ENCODE measurements at regions of chr17 and their contacts with region 1.

Region 1: GRCh38 chr17:75109407-75110233 is at the start of gene ARMC7:
- DNase-seq: peak; percentile 86 to 92 (median 88)
- H3K4me3 ChIP-seq: peak within 1 kb of the TSS; percentile 93
- H3K4me3 Mint-ChIP-seq: peak within 1 kb of the TSS; percentile 87 to 93 (median 91)
- H3K27ac ChIP-seq: peak within 1 kb of the TSS; percentile 59
- H3K27ac Mint-ChIP-seq: peak within 1 kb of the TSS; percentile 81 to 96 (median 91)
- H3K4me1 ChIP-seq: peaks cover 28% of the 10 kb centered on the region
- H3K4me1 Mint-ChIP-seq: peaks cover 29 to 42% (median 36%) of the 10 kb centered on the region in 3 donors
- H3K27me3 ChIP-seq: no peaks in the 10 kb centered on the region
- H3K27me3 Mint-ChIP-seq: no peaks in the 10 kb centered on the region
- total RNA-seq, gene ARMC7: 15.2 to 15.9 TPM

Region 2: DNA sequence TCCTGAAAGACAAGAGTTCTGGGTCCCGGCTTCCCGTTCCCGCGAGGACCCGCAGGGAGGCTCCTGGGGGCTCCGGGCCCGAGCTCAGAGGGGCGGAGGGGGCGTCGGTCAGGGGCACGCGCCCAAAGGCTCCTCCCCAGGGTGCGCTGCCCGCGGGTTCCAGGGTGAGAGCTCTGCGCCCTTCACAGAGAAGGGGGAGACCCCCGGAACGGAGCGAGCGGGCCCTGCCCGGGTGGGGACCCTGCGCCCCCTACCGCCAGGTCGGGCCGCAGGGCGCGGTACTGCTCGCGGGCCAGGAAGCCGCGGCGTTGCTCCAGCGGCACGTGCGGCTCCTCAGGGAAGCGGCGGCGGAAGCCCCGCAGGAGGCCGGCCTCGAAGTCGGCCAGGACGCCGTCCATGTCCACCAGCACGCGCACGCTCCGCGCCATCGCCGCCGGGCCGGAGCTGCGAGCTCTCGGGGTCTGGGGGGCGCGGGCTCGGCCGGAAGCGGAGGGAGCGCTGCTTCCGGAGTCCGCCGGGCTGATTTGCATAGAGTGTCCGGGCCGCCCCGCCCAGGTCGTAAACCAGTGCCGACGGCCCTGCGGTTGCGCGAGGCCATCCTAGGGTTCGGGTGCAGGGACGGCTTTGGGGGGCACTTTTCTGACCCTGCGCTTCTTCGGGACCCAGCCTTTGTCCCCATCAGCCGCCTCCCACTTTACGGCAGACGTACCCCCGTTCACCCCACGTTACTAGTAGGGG is 21.8 kb after region 1 on chr17 and contains the start of gene NT5C:
- CTCF ChIA-PET with region 1: interaction called, 151 read pairs
- POLR2A ChIA-PET with region 1: interaction called, 12 read pairs
- DNase-seq: peak; percentile 48 to 70 (median 64)
- H3K4me3 ChIP-seq: peak within 1 kb of the TSS; percentile 52
- H3K4me3 Mint-ChIP-seq: peak within 1 kb of the TSS; percentile 84 to 97 (median 89)
- H3K27ac ChIP-seq: peak within 1 kb of the TSS; percentile 67
- H3K27ac Mint-ChIP-seq: peak within 1 kb of the TSS; percentile 56 to 96 (median 88)
- H3K4me1 ChIP-seq: peaks cover 10% of the 10 kb centered on the region
- H3K4me1 Mint-ChIP-seq: peaks cover 7 to 16% (median 11%) of the 10 kb centered on the region in 3 donors
- H3K27me3 ChIP-seq: no peaks in the 10 kb centered on the region
- H3K27me3 Mint-ChIP-seq: no peaks in the 10 kb centered on the region
- total RNA-seq, gene NT5C: 75.7 to 84.8 TPM

Region 3: DNA sequence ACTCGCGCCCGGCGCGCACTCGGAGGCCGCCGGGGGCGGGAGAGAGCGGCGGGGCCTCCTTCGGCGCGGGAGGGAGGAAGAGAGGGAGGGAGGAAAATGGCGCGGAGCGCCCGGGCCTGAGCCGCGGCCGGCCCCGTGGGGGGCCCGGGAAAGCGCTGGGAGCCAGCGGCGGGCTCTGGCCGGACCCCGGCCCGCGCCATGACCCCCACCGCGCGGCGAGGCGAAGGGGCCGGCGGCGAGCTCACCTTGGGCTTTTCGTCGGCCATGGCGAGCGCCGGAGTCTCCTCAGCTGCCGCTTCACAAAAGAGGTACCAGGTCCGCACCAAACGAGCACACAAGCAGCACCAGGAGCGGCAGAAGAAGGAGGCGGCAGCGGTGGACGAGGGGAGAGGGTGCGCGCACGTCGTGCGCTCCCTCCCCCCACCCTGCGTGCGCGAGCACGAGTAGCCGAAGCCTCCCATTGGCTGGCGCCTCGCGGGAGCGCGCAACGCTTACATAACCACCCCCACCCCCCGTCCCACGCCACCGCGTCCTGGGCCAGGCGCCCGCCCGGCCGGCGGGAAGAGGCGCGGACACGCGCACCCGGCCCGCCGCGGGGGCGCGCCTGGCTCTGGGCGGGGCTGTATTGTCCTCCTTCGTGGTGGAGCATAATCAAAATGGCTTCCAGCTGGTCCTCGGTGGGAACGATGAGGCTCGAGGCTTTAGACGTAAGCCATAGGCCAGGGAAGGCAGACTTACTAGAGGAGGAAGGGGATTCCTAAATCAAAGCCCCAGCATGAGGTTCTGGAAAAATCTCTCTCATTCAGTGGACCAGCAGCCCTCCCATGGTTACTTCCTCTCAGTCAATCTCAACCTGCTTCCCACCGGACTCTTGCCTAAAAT is 73.2 kb after region 1 on chr17 and contains the start of gene SUMO2:
- CTCF ChIA-PET with region 1: interaction called, 11 read pairs
- POLR2A ChIA-PET with region 1: interaction called, 7 read pairs
- DNase-seq: peak; percentile 93 to 97 (median 94)
- H3K4me3 ChIP-seq: peak within 1 kb of the TSS; percentile 91
- H3K4me3 Mint-ChIP-seq: peak within 1 kb of the TSS; percentile 88 to 97 (median 91)
- H3K27ac ChIP-seq: peak within 1 kb of the TSS; percentile 85
- H3K27ac Mint-ChIP-seq: peak within 1 kb of the TSS; percentile 93 to 97 (median 96)
- H3K4me1 ChIP-seq: peaks cover 33% of the 10 kb centered on the region
- H3K4me1 Mint-ChIP-seq: peaks cover 27 to 51% (median 45%) of the 10 kb centered on the region in 3 donors
- H3K27me3 ChIP-seq: no peaks in the 10 kb centered on the region
- H3K27me3 Mint-ChIP-seq: peaks cover 0 to 3% of the 10 kb centered on the region in 2 donors
- total RNA-seq, gene SUMO2: 653 to 687 TPM

Region 4: DNA sequence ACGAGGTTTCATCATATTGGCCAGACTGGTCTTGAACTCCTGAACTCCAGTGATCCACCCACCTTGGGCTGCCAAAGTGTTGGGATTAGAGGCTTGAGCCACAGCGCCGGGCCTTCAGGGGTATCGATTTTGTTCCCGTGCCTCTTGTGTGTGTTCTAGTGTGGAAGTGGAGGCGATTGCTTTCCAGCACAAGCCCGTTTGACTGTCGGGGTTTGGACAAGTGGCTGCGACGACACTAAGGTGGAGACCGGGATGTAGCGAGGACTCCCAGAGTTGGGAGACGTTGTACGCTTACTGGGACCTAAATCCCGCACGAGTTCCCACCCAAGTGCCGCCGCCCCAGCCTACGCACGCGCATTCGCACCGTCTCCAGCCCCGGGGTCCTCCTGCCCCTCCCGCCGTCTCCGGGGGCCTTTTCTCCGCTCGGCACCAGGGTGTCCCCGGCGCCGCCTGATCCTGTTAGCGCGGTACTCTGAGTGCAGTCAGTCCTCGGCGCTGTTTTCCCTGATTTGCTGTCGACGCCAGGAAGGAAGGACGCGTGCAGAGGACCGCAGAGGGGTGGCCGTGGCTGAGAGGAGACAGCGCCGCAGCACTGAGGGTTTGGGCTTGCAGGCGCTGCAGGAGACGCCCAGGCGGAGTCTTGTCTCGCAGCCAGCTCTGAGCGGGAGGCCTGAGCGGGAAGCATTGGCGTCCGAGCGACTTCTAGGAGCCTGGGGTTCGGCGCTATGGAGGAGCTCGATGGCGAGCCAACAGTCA is 95.6 kb after region 1 on chr17 and contains the start of gene NUP85:
- CTCF ChIA-PET with region 1: interaction called, 174 read pairs
- POLR2A ChIA-PET with region 1: interaction called, 5 read pairs
- DNase-seq: peak; percentile 88 to 94 (median 91)
- H3K4me3 ChIP-seq: peak within 1 kb of the TSS; percentile 92
- H3K4me3 Mint-ChIP-seq: peak within 1 kb of the TSS; percentile 94 to 98 (median 96)
- H3K27ac ChIP-seq: peak within 1 kb of the TSS; percentile 91
- H3K27ac Mint-ChIP-seq: peak within 1 kb of the TSS; percentile 93 to 99 (median 98)
- H3K4me1 ChIP-seq: peaks cover 8% of the 10 kb centered on the region
- H3K4me1 Mint-ChIP-seq: peaks cover 31 to 42% (median 39%) of the 10 kb centered on the region in 3 donors
- H3K27me3 ChIP-seq: no peaks in the 10 kb centered on the region
- H3K27me3 Mint-ChIP-seq: no peaks in the 10 kb centered on the region
- total RNA-seq, gene NUP85: 147 to 152 TPM

Region 5: GRCh38 chr17:75261336-75262111 is 151.9 kb after region 1 on chr17 and contains the starts of genes GGA3 and MRPS7:
- CTCF ChIA-PET with region 1: interaction called, 13 read pairs
- POLR2A ChIA-PET with region 1: interaction called, 4 read pairs
- DNase-seq: peak; percentile 93 to 97 (median 97)
- H3K4me3 ChIP-seq: peak within 1 kb of the TSS; percentile 94
- H3K4me3 Mint-ChIP-seq: peak within 1 kb of the TSS; percentile 92 to 98 (median 95)
- H3K27ac ChIP-seq: peak within 1 kb of the TSS; percentile 99
- H3K27ac Mint-ChIP-seq: peak within 1 kb of the TSS; percentile 99 to 100 (median 100)
- H3K4me1 ChIP-seq: peaks cover 29% of the 10 kb centered on the region
- H3K4me1 Mint-ChIP-seq: peaks cover 48 to 68% (median 52%) of the 10 kb centered on the region in 3 donors
- H3K27me3 ChIP-seq: no peaks in the 10 kb centered on the region
- H3K27me3 Mint-ChIP-seq: peaks cover 0 to 3% of the 10 kb centered on the region in 2 donors
- total RNA-seq, gene GGA3: 73.2 to 75.1 TPM
- total RNA-seq, gene MRPS7: 101 to 102 TPM

Region 6: DNA sequence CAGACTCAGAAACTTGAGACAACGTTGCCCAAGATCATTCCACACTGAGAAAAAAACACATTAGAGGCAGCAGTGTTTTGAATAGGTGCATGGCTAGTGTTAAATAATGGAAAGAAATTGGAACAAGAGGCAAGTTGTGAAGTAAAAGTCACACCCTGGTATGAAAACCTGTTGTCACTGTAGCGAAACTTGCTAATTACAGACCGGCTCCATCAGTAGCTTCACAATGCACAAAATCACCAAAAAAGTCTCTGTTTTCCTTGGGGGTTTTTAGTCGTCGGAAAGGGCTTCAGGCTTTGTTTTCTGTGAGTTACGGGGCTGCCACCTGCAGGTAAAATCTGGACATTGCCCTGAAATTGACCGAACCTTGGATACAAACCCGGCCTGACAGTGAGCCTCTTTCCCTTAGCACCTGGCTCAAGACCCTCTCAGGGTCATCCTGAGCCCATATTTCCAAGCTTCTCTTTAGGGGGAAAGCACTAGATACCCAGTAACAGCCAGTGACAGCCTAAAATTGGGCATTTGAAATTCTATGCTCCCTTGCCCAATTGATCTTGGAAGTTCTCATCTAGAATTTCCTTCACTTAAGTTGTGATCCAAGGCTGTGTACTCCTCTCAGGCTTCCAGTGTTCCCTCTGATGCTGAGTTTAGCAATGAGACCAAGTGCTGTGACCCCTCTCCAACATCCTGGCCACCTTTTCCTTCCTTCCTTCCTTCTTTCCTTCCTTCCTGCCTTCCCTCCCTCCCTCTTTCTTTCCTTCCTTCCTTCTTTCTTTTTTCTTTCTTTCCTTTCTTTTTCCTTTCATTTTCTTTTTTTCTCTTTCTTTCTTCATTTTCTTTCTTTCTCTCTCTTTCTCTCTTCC is 303.1 kb after region 1 on chr17:
- CTCF ChIA-PET with region 1: interaction called, 18 read pairs
- POLR2A ChIA-PET with region 1: interaction called, 4 read pairs
- DNase-seq: peak; percentile 37 to 83 (median 66)
- H3K4me3 ChIP-seq: no peak overlapping the region
- H3K4me3 Mint-ChIP-seq: peak overlapping the region in 3 of 7 donors; percentile 33 to 46 (median 42)
- H3K27ac ChIP-seq: no peak overlapping the region
- H3K27ac Mint-ChIP-seq: peak overlapping the region in 7 of 8 donors; percentile 2 to 66 (median 22)
- H3K4me1 ChIP-seq: peaks cover 13% of the 10 kb centered on the region
- H3K4me1 Mint-ChIP-seq: peaks cover 9 to 15% (median 11%) of the 10 kb centered on the region in 3 donors
- H3K27me3 ChIP-seq: no peaks in the 10 kb centered on the region
- H3K27me3 Mint-ChIP-seq: peaks cover 10 to 13% of the 10 kb centered on the region in 2 donors

Measured in CD8-positive, alpha-beta memory T cell (primary cell).